ENCODE measurements at regions of chr2 and their contacts with region 1.

Region 1: GRCh38 chr2:83561592-83561991 is 897.5 kb downstream of the SUCLG1 start:
- DNase-seq: no peak
- H3K4me3 ChIP-seq: no peak overlapping the region
- H3K27ac ChIP-seq: no peak overlapping the region
- H3K4me1 ChIP-seq: no peaks in the 10 kb centered on the region
- H3K27me3 ChIP-seq: no peaks in the 10 kb centered on the region
- CTCF ChIP-seq: no peak
- POLR2A ChIP-seq: no peak

Region 2: GRCh38 chr2:84713441-84713840 is 1151.8 kb after region 1 on chr2:
- intact Hi-C with region 1: loop called (anchors 5 kb)
- DNase-seq: no peak
- H3K4me3 ChIP-seq: no peak overlapping the region
- H3K27ac ChIP-seq: no peak overlapping the region
- H3K4me1 ChIP-seq: no peaks in the 10 kb centered on the region
- H3K27me3 ChIP-seq: no peaks in the 10 kb centered on the region
- CTCF ChIP-seq: no peak
- POLR2A ChIP-seq: no peak